ENCODE measurements at regions of chr17 and their contacts with region 1.

Region 1: GRCh38 chr17:48175692-48176470 is 68.3 kb downstream of the SNX11 start:
- DNase-seq: no peak
- CTCF ChIP-seq: no peak

Region 2: GRCh38 chr17:48163813-48164212 is 12.1 kb before region 1 on chr17:
- CTCF ChIA-PET with region 1: interaction called, 10 read pairs
- POLR2A ChIA-PET with region 1: no interaction called
- DNase-seq: no peak
- CTCF ChIP-seq: no peak

Measured in GM10248 (cell line).